ENCODE measurements at regions of chr6 and their contacts with region 1.

Region 1: GRCh38 chr6:46996860-46997641 is 45.1 kb downstream of the ADGRF1 start:
- DNase-seq: no peak
- H3K4me3 ChIP-seq: no peak overlapping the region
- CTCF ChIP-seq: no peak
- POLR2A ChIP-seq: no peak

Region 2: DNA sequence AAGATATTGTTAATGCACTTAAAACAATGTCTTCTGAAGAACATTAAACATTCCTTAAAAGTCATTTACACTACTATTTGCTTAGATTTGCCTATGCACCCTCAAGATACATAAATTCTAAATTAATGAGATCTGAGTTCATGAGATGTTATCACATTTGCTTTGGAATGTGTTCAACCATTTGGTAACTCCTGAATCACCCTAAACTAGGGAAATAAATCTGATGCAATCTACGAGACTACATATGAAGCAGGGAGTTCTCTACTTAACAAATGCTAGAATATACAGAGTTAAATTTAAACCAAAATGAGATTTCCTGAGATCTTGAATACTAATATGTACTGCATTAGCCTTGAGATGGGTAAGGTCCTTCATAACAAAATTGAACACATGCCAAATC is 1151.5 kb before region 1 on chr6:
- intact Hi-C with region 1: loop called (anchors 5 kb)
- DNase-seq: no peak
- H3K4me3 ChIP-seq: no peak overlapping the region
- CTCF ChIP-seq: no peak
- POLR2A ChIP-seq: no peak

Measured in lower leg skin (tissue), 4 donors.